Endothelial cell of umbilical vein (primary cell): ENCODE measurements at regions of chr7 and their contacts with region 1.

Region 1: GRCh38 chr7:36487756-36488336 is 98.2 kb downstream of the ANLN start:
- DNase-seq: peak; percentile 70
- H3K4me3 ChIP-seq: no peak overlapping the region
- H3K27ac ChIP-seq: no peak overlapping the region
- H3K4me1 ChIP-seq: no peaks in the 10 kb centered on the region
- H3K27me3 ChIP-seq: peaks cover 8 to 25% of the 10 kb centered on the region in 2 experiments
- CTCF ChIP-seq: peak; percentile 38 to 53
- POLR2A ChIP-seq: no peak

Region 2: DNA sequence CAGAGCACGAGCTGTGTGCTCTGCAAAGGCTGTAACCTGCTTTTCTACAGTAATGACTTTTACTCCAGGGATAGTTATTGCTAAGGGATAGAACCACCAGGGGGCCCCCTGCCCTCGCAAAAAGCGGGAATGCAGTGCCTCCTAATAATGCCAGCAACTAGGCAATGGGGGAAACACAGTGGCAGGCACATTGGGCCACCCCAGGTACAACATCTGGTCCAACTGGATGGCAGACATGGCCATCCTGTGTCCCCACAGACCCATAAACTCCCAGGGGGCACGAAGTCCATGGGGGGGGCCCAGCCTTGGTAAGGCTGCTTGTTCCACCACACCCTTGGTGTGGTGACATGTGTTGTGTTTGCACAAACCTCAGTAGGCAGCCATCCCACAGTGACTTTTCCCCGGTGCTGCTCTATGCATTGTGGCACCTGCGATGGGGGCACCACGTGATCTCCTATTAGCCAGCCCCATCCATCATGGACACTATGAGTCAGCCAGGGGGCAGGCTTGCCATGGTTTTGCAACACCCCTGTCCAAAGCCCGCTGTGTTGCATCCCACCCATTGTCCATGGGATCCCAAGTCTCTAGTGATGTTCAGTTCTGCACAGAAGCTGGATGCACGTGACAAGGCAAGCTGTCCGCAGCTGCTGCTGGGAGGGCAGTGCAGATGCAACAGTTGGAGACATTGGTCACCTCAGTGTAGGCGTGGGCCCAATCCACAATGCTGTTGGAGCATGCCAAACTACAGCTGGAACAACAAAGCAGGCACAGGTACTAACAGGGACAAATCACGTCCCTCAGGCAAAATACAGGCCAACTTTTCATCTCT is 14.2 kb before region 1 on chr7:
- CTCF ChIA-PET with region 1: interaction called, 14 read pairs
- POLR2A ChIA-PET with region 1: no interaction called
- dilution Hi-C with region 1: no loop called
- intact Hi-C with region 1: no loop called
- DNase-seq: peak; percentile 40
- H3K4me3 ChIP-seq: no peak overlapping the region
- H3K27ac ChIP-seq: peak overlapping the region; percentile 54
- H3K4me1 ChIP-seq: peaks cover 22% of the 10 kb centered on the region
- H3K27me3 ChIP-seq: no peaks in the 10 kb centered on the region
- CTCF ChIP-seq: peak; percentile 55 to 57
- POLR2A ChIP-seq: no peak

Region 3: DNA sequence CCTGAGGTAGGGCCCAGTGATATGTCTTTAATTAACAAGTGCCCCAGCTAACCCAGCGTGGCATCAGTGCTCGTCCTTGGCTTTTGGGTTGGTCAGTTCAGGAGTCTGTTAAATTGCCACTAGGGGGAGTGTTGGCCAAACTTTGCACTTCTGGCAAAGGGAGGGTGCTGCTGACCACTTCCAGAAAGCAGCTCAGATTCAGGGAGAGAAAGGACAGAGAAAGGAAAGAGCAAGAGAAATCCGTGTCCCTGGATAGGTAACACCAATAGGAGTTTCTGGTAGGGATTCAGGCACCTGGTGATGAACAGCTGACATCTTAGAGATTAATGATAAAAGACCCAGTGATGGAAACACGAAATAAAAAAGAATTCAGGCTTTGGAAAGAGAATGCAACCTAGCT is 479.5 kb after region 1 on chr7:
- CTCF ChIA-PET with region 1: interaction called, 20 read pairs
- POLR2A ChIA-PET with region 1: no interaction called
- dilution Hi-C with region 1: no loop called
- intact Hi-C with region 1: loop called (anchors 5 kb)
- DNase-seq: peak; percentile 72
- H3K4me3 ChIP-seq: no peak overlapping the region
- H3K27ac ChIP-seq: no peak overlapping the region
- H3K4me1 ChIP-seq: peaks cover 19% of the 10 kb centered on the region
- H3K27me3 ChIP-seq: no peaks in the 10 kb centered on the region
- CTCF ChIP-seq: peak; percentile 78 to 86
- POLR2A ChIP-seq: no peak

Region 4: DNA sequence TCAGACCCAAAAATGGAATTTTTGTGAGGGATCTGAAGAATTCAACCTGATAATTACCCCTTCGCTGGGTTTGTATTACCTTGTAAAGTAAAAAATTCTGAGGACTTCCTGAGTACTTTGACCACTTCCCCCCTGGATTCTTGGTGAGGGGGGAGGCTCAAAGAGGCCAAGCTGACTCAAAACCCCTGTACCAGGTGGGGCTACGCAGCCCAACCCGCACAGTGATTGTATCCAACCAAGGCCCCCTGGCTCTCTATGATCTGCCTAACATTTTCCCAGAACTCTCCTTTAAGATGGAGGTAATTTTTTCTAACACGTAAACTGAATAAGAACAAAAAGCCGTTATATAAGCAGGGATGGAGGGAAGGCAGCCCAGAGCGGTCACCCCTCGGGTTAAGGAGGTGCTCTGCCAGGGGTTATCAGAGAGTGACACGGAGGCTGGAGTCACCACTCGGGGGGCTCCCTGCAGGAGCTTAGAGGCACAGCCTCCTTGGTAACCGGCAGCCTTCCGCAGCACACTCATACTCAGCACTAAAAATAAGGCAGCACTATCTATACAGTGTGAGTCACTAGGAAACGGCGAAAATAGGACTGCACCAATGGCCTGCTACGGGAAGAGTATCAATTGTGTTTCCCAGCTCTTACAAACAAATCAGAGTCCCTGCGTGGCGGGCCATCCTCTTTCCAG is 705.4 kb after region 1 on chr7:
- CTCF ChIA-PET with region 1: interaction called, 182 read pairs
- POLR2A ChIA-PET with region 1: no interaction called
- dilution Hi-C with region 1: no loop called
- intact Hi-C with region 1: no loop called
- DNase-seq: peak; percentile 56
- H3K4me3 ChIP-seq: no peak overlapping the region
- H3K27ac ChIP-seq: peak overlapping the region; percentile 5
- H3K4me1 ChIP-seq: no peaks in the 10 kb centered on the region
- H3K27me3 ChIP-seq: no peaks in the 10 kb centered on the region
- CTCF ChIP-seq: no peak
- POLR2A ChIP-seq: no peak

Region 5: DNA sequence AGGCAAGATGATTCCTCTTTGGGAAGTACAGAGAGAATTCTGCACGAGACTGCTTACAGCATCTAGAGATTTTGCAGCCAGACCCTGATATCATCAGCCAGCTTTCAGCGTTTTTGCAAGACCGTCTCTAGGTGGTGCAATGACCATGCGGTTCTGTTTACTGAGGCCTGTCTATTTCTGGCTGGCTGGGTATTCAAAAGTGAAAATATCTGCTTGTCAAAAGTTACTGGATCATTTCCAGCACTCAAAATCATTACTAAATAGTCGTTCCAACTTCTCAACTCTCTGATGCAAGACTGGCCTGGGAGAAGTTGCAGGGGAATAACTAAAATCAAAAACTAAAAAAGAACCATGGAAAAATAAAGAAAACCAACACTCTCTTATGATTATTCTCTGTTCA is 720.7 kb after region 1 on chr7:
- CTCF ChIA-PET with region 1: interaction called, 10 read pairs
- POLR2A ChIA-PET with region 1: no interaction called
- dilution Hi-C with region 1: no loop called
- intact Hi-C with region 1: no loop called
- DNase-seq: peak; percentile 73
- H3K4me3 ChIP-seq: no peak overlapping the region
- H3K27ac ChIP-seq: no peak overlapping the region
- H3K4me1 ChIP-seq: no peaks in the 10 kb centered on the region
- H3K27me3 ChIP-seq: no peaks in the 10 kb centered on the region
- CTCF ChIP-seq: peak; percentile 31 to 61
- POLR2A ChIP-seq: no peak